Naive thymus-derived CD4-positive, alpha-beta T cell (primary cell): ENCODE measurements at regions of chr3 and their contacts with region 1.

Region 1: DNA sequence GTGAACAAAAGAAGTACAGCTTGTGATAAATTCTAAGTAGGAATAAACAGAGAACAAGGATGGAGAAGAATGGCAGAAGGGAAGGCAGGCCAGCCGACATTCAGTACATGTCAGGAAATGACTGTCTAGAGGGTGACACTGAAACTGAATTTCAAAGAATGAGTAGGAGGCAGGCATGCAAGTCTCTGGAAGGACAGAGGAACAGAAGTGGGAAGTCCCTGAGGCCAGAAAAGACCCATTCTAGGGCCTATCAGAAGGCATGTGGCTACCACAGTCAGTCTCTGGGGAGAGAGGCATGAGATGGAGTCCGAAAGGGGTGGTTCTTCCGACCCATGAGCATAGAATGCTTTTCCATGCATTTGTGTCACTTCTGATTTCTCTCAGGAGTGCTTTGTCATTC is 243.5 kb upstream of the UBE2E2 start:
- DNase-seq: no peak
- ATAC-seq: no peak
- H3K4me3 ChIP-seq: no peak overlapping the region
- H3K4me3 Mint-ChIP-seq: no peak overlapping the region
- H3K27ac ChIP-seq: no peak overlapping the region
- H3K27ac Mint-ChIP-seq: no peak overlapping the region
- H3K4me1 ChIP-seq: no peaks in the 10 kb centered on the region
- H3K4me1 Mint-ChIP-seq: no peaks in the 10 kb centered on the region
- H3K27me3 ChIP-seq: no peaks in the 10 kb centered on the region
- H3K27me3 Mint-ChIP-seq: peaks cover 0 to 8% (median 0%) of the 10 kb centered on the region in 5 donors

Region 2: DNA sequence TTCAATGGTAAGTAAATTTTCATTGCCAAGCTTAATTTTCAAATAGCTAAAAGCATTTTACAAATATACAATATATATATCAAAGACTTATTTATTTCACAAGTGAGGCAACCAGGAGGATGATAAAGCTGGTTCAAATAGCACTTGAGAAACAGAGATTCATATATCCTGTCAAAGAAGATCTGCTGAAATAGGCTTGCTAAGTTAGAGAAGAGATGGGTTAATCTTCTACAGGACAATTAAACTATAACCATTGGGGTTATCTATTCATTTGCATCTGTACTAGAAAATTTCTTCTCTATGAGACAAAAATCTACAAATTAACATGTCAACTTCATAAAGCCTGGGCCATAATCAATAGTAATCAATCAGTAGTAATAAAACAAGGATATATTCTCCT is 394.2 kb before region 1 on chr3:
- CTCF ChIA-PET with region 1: no interaction called
- POLR2A ChIA-PET with region 1: no interaction called
- intact Hi-C with region 1: loop called in 1 of 2 experiments (anchors 2 kb)
- DNase-seq: no peak
- ATAC-seq: no peak
- H3K4me3 ChIP-seq: no peak overlapping the region
- H3K4me3 Mint-ChIP-seq: no peak overlapping the region
- H3K27ac ChIP-seq: no peak overlapping the region
- H3K27ac Mint-ChIP-seq: no peak overlapping the region
- H3K4me1 ChIP-seq: no peaks in the 10 kb centered on the region
- H3K4me1 Mint-ChIP-seq: no peaks in the 10 kb centered on the region
- H3K27me3 ChIP-seq: no peaks in the 10 kb centered on the region
- H3K27me3 Mint-ChIP-seq: peaks cover 0 to 3% (median 0%) of the 10 kb centered on the region in 5 donors

Region 3: DNA sequence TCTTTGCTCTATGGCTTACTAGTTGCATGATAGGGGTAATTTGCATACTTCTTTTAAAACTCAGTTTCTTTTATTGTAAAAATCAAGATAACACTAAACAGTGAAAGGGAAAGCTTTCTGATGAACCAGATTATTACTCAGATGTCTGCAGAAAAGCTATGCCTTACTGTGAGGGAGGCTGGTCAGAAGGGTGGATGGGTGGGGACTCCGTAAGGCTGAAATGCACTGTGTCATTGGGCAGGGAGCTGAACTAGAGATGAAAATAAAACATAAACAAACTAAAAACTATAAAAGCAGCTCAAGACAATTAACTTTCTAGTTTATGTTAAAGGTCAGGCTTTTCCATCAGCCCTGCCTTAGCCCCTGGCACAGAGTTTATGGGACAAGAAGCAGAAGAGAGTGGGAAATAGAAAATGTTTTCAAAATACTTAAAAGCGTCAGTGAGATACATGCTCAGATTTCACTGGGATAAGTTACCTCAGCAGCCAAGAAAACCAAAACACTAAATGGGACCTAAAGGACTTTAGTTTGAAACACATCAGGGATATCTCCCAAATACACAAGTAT is 66.5 kb before region 1 on chr3:
- CTCF ChIA-PET with region 1: no interaction called
- POLR2A ChIA-PET with region 1: no interaction called
- intact Hi-C with region 1: no loop called
- DNase-seq: no peak
- ATAC-seq: no peak
- H3K4me3 ChIP-seq: no peak overlapping the region
- H3K4me3 Mint-ChIP-seq: no peak overlapping the region
- H3K27ac ChIP-seq: no peak overlapping the region
- H3K27ac Mint-ChIP-seq: no peak overlapping the region
- H3K4me1 ChIP-seq: no peaks in the 10 kb centered on the region
- H3K4me1 Mint-ChIP-seq: no peaks in the 10 kb centered on the region
- H3K27me3 ChIP-seq: no peaks in the 10 kb centered on the region
- H3K27me3 Mint-ChIP-seq: peaks cover 0 to 17% (median 0%) of the 10 kb centered on the region in 5 donors